ENCODE measurements at regions of chr10 and their contacts with region 1.

Region 1: GRCh38 chr10:79379512-79380124 is 32.3 kb downstream of the PPIF start:
- DNase-seq: peak in 1 of 2 donors; percentile 68
- ATAC-seq: peak; percentile 16
- H3K4me3 ChIP-seq: no peak overlapping the region
- H3K27ac ChIP-seq: peak overlapping the region in 1 of 2 donors; percentile 25
- H3K4me1 ChIP-seq: no peaks in the 10 kb centered on the region
- H3K27me3 ChIP-seq: no peaks in the 10 kb centered on the region

Region 2: DNA sequence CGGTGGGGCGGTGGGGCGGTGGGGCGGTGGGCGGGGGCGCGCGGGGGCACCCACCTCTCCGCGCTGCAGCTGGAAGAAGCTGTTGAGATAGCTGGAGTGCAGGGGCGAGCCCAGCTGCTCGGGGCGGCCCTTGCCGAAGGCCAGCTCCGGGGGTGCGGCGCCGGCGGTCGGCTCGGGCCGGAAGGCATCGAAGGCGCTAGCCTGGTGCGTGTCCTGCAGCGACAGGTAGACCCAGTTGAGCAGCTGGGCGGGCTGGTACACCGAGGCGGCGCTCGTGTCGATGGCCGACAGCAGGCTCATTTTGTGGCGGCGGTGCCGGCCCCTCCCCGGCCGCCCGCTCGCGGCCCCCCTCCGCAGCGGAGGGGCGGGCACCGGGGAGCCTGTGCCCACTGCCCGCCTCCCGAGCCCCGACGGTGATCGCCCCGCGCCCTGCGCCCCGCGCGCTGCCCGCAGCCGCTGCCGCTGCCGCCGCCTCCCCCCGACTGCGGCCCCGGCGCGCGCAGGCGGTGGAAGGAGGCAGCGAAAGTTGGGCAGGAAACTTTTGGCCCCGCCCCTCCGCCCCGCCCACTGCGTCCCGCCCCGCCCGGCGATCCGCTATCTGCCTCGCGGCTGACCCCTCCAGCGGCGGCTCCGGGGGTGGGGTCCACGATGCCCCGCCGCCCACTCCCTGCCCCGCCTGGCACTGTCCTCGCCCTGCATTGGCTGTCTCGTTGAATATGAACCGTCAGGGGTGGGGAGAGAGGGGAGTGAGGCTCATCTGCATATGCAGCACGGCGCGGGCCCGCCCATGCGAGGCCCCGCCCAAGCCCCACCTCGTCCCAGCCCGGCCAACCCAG is 65.7 kb after region 1 on chr10 and contains the start of gene ZCCHC24:
- intact Hi-C with region 1: loop called in 1 of 2 experiments (anchors 1 kb)
- DNase-seq: peak; percentile 99
- ATAC-seq: peak; percentile 96
- H3K4me3 ChIP-seq: peak within 1 kb of the TSS; percentile 87 to 90
- H3K27ac ChIP-seq: peak within 1 kb of the TSS; percentile 38 to 90
- H3K4me1 ChIP-seq: no peaks in the 10 kb centered on the region
- H3K27me3 ChIP-seq: no peaks in the 10 kb centered on the region
- total RNA-seq, gene ZCCHC24: 79.3 to 99.6 TPM

Measured in aorta (tissue), 5 donors.